ENCODE measurements at regions of chr14 and their contacts with region 1.

Region 1: GRCh38 chr14:94945615-94946014 is 175.7 kb upstream of the GSC start:
- DNase-seq: peak in 8 of 9 experiments; percentile 9 to 86 (median 37)
- ATAC-seq: peak; percentile 89
- H3K4me3 ChIP-seq: no peak overlapping the region
- H3K4me3 Mint-ChIP-seq: peak overlapping the region; percentile 46
- H3K27ac ChIP-seq: peak overlapping the region; percentile 63 to 87
- H3K27ac Mint-ChIP-seq: peak overlapping the region; percentile 95
- H3K4me1 ChIP-seq: peaks cover 10% of the 10 kb centered on the region
- H3K4me1 Mint-ChIP-seq: peaks cover 15% of the 10 kb centered on the region
- H3K27me3 ChIP-seq: no peaks in the 10 kb centered on the region
- H3K27me3 Mint-ChIP-seq: peaks cover 4% of the 10 kb centered on the region
- CTCF ChIP-seq: no peak

Region 2: GRCh38 chr14:95123891-95124579 is 178.4 kb after region 1 on chr14:
- CTCF ChIA-PET with region 1: no interaction called
- POLR2A ChIA-PET with region 1: no interaction called
- intact Hi-C with region 1: no loop called
- DNase-seq: no peak
- ATAC-seq: no peak
- H3K4me3 ChIP-seq: no peak overlapping the region
- H3K4me3 Mint-ChIP-seq: no peak overlapping the region
- H3K27ac ChIP-seq: no peak overlapping the region
- H3K27ac Mint-ChIP-seq: no peak overlapping the region
- H3K4me1 ChIP-seq: no peaks in the 10 kb centered on the region
- H3K4me1 Mint-ChIP-seq: peaks cover 19% of the 10 kb centered on the region
- H3K27me3 ChIP-seq: no peaks in the 10 kb centered on the region
- H3K27me3 Mint-ChIP-seq: no peaks in the 10 kb centered on the region
- CTCF ChIP-seq: no peak

Region 3: DNA sequence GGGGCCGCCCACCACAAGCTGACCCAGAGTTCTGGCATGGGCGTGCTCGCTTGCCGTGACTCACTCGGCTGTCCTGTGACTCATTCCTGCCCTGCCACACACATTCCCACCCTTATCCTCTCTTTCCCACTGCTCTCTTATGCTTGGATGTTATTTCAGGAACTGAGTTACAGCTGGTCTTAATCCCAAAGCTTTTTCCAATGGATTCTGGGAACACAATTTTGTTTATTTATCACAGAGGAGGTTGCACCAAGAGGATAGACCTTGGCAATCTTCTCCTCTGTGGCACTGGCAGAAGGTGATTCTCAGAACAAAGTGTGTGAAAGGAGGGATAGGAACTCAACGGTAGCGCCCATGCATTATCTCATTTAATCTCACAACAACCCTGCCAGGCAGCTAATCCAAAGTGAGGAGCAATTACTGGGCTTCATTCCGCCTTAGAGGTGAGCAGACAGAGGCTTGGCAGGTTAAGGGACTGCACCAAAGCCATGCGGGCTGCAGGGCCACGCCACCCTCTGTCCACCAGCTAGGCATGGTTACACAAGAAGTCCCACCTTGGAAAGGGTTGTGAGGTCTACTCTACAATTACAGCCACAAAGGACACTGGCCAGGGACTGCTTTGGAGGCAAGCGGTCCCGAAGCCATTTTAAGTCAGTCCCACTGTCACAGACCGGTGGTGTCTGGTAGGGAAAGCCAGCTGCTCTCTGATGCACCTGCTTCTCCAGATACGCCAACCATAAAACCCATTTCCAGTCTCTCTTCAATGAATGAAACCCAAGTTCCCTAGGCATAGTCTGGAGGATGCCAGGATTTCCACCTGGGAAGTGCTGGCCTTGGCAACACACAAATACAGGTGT is 537.9 kb after region 1 on chr14:
- CTCF ChIA-PET with region 1: no interaction called
- POLR2A ChIA-PET with region 1: no interaction called
- intact Hi-C with region 1: loop called in 1 of 2 experiments (anchors 5 kb)
- DNase-seq: no peak
- ATAC-seq: no peak
- H3K4me3 ChIP-seq: no peak overlapping the region
- H3K4me3 Mint-ChIP-seq: no peak overlapping the region
- H3K27ac ChIP-seq: no peak overlapping the region
- H3K27ac Mint-ChIP-seq: peak overlapping the region; percentile 19
- H3K4me1 ChIP-seq: peaks cover 19% of the 10 kb centered on the region
- H3K4me1 Mint-ChIP-seq: peaks cover 53% of the 10 kb centered on the region
- H3K27me3 ChIP-seq: no peaks in the 10 kb centered on the region
- H3K27me3 Mint-ChIP-seq: no peaks in the 10 kb centered on the region
- CTCF ChIP-seq: no peak